ENCODE measurements at regions of chr14 and their contacts with region 1.

Region 1: GRCh38 chr14:100662879-100663760 is 63.6 kb upstream of the DLK1 start:
- DNase-seq: peak; percentile 68 to 84 (median 77)
- ATAC-seq: peak in 1 of 2 donors; percentile 57
- H3K4me3 ChIP-seq: no peak overlapping the region
- H3K27ac ChIP-seq: no peak overlapping the region
- H3K4me1 ChIP-seq: no peaks in the 10 kb centered on the region
- H3K27me3 ChIP-seq: no peaks in the 10 kb centered on the region

Region 2: GRCh38 chr14:100440187-100440631 is 222.9 kb before region 1 on chr14:
- intact Hi-C with region 1: loop called in 1 of 4 experiments (anchors 10 kb)
- DNase-seq: peak; percentile 62 to 87 (median 85)
- ATAC-seq: peak; percentile 82 to 86
- H3K4me3 ChIP-seq: no peak overlapping the region
- H3K27ac ChIP-seq: peak overlapping the region; percentile 71
- H3K4me1 ChIP-seq: peaks cover 2% of the 10 kb centered on the region
- H3K27me3 ChIP-seq: no peaks in the 10 kb centered on the region

Region 3: DNA sequence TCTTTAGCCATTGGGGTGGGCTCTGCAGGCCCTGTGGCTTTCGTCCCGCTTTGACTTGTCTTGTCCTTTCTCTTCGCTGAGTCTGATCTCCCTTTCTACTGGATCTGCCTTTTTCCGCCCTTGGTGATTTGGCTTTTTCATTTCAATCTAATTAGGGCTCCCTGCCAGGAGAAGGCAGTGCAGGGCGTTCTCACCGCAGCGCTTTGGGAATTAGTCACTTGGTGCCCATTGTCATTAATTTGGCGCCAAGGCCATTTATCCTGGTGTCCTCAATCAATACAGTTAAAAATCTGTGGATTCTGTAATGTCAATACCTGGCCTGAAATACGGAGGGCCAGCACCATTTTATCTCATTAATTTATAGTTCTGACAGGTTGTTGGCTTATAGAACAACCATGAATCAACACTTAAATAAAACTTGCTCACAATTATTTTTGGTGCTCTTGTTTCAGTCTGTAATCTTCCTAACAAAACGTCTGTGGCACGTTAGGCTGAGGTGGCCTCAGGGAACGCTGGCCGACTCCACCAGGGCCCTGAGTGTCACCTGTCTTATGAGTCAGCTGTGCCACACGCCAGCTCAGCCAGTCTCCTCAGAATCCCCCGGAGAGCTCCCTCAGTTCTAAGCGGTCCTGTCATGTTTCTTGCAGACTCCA is 191.6 kb before region 1 on chr14:
- intact Hi-C with region 1: no loop called
- DNase-seq: no peak
- ATAC-seq: no peak
- H3K4me3 ChIP-seq: no peak overlapping the region
- H3K27ac ChIP-seq: no peak overlapping the region
- H3K4me1 ChIP-seq: no peaks in the 10 kb centered on the region
- H3K27me3 ChIP-seq: no peaks in the 10 kb centered on the region

Measured in right cardiac atrium (tissue), 5 donors.